ENCODE measurements at regions of chr2 and their contacts with region 1.

Region 1: GRCh38 chr2:166361351-166362153 is 14.2 kb downstream of the SCN9A start:
- DNase-seq: no peak
- ATAC-seq: no peak
- H3K4me3 ChIP-seq: no peak overlapping the region
- H3K27ac ChIP-seq: no peak overlapping the region
- H3K4me1 ChIP-seq: no peaks in the 10 kb centered on the region
- H3K27me3 ChIP-seq: no peaks in the 10 kb centered on the region
- CTCF ChIP-seq: peak; percentile 64; the same call in 1 of the 2 replicates

Region 2: DNA sequence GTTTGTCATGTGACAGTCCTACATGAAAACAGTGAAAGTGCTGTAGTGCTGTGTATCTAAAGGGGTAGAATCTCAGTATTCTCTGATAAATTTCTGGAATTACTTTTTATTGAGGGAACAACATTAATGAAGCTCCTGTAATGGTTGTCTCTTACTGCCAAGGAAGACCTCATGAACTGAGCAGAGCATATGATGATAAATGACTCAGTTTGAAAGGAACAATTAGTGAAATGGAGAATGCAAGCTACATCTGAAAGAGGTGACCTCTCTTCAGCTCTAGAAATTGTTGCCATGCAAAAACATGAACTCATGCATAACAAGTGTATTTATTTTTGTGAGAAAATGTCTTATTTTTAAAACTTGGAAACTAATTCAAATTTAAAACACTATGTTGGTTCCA is 79.4 kb before region 1 on chr2:
- CTCF ChIA-PET with region 1: no interaction called
- POLR2A ChIA-PET with region 1: no interaction called
- in situ Hi-C with region 1: no loop called
- intact Hi-C with region 1: no loop called
- DNase-seq: no peak
- ATAC-seq: no peak
- H3K4me3 ChIP-seq: no peak overlapping the region
- H3K27ac ChIP-seq: no peak overlapping the region
- H3K4me1 ChIP-seq: no peaks in the 10 kb centered on the region
- H3K27me3 ChIP-seq: no peaks in the 10 kb centered on the region
- CTCF ChIP-seq: no peak

Region 3: GRCh38 chr2:166417669-166418068 is 56.1 kb after region 1 on chr2:
- CTCF ChIA-PET with region 1: no interaction called
- POLR2A ChIA-PET with region 1: no interaction called
- in situ Hi-C with region 1: no loop called
- intact Hi-C with region 1: loop called (anchors 2 kb)
- DNase-seq: no peak
- ATAC-seq: no peak
- H3K4me3 ChIP-seq: no peak overlapping the region
- H3K27ac ChIP-seq: no peak overlapping the region
- H3K4me1 ChIP-seq: no peaks in the 10 kb centered on the region
- H3K27me3 ChIP-seq: no peaks in the 10 kb centered on the region
- CTCF ChIP-seq: peak; percentile 22; the same call in 1 of the 2 replicates

Region 4: GRCh38 chr2:166516712-166517303 is 155.3 kb after region 1 on chr2:
- CTCF ChIA-PET with region 1: interaction called, 8 read pairs
- POLR2A ChIA-PET with region 1: no interaction called
- in situ Hi-C with region 1: no loop called
- intact Hi-C with region 1: loop called (anchors 5 kb)
- DNase-seq: no peak
- ATAC-seq: no peak
- H3K4me3 ChIP-seq: no peak overlapping the region
- H3K27ac ChIP-seq: no peak overlapping the region
- H3K4me1 ChIP-seq: no peaks in the 10 kb centered on the region
- H3K27me3 ChIP-seq: no peaks in the 10 kb centered on the region
- CTCF ChIP-seq: peak; percentile 66; the same call in 1 of the 2 replicates

Region 5: DNA sequence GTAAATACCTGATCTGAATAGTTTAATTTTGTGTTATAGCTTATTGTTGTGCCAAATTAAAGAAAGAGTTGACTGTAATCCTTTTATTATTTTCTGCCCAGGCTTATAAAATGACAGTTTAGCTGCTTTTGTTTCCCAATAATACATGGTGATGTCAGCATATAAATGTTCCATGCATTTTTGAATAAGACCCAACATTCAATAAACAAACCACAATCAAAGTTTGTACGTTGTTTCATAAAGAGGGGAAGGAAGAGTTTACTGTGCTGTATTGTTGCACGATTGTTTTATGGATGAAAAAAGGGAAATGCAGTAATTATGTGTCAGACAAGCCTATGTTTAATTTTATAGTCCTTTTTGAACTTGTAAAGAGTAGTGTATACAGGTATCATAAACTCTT is 309.7 kb after region 1 on chr2:
- CTCF ChIA-PET with region 1: no interaction called
- POLR2A ChIA-PET with region 1: no interaction called
- in situ Hi-C with region 1: no loop called
- intact Hi-C with region 1: no loop called
- DNase-seq: no peak
- ATAC-seq: no peak
- H3K4me3 ChIP-seq: no peak overlapping the region
- H3K27ac ChIP-seq: no peak overlapping the region
- H3K4me1 ChIP-seq: no peaks in the 10 kb centered on the region
- H3K27me3 ChIP-seq: no peaks in the 10 kb centered on the region
- CTCF ChIP-seq: no peak